GM18951 (cell line): ENCODE measurements at regions of chr15 and their contacts with region 1.

Region 1: DNA sequence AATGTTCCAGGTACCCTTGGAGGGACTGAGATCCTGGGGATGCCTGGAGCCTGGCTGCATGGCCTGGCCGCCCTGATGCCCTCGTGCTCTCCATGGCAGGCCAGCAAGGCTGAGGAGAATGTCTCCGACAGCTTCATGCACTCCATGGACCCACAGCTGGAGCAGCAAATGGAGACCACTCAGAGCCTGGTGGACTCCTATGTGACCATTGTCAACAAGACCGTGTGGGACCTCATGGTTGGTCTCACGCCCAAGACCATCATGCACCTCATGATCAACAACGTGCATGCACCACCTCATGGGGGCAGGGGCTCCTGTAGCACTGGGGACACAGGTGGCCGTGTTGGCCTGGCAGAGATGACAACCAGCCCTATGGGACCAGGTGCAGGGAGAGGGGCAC is 19.7 kb downstream of the GOLGA6A start:
- POLR2A ChIP-seq: no peak

Region 2: GRCh38 chr15:73273181-73274002 is 789.3 kb before region 1 on chr15:
- in situ Hi-C with region 1: no loop called
- POLR2A ChIP-seq: no peak

Region 3: GRCh38 chr15:73972984-73973682 is 89.5 kb before region 1 on chr15:
- in situ Hi-C with region 1: no loop called
- POLR2A ChIP-seq: no peak

Region 4: GRCh38 chr15:74184276-74185091 is 121.8 kb after region 1 on chr15:
- in situ Hi-C with region 1: no loop called
- POLR2A ChIP-seq: no peak

Region 5: DNA sequence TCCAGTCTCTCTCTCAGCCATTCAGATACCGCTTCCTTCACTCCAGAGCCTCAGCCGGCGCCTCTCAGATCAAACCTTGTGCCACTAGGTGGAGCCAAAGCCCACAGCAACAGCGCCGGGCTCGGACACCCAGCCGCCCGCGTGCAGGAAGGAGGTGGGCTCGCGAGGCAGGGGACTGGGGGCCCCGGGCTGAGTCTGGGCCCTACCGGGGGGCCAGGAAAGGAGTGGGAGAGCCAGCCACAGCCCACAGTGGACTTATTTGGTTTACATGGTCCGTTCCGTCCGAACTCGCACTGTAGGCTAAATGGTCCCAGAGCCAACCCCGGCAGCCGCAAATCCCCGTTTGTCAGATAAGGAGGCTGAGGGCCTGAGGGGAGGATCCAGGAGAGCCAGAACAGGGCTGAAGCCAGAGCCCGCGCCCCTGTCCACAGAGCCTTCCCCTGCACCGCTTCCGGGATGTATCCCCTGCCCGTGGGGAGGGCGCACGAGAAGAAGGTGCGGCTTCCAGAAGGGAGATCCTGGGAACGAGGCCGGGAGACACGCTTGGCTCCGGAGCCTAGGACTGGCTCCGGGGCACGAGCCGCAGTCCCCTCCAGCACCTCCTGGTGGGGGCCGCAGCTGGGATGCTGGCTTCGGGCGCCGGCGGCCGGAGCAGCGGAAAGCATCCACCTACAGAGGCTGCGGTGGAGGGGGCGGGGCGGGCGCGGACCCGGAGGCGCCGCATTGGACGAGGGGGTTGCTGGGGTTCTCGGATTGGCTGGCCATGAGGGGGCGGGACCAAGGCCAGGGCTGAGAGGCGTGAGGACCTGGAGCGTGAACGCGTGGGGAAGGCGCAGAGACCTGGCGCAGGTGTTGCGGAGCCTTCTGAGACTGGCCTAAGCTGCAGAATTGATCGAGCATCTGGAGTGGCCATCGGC is 311.3 kb after region 1 on chr15:
- in situ Hi-C with region 1: no loop called
- POLR2A ChIP-seq: peak; percentile 57

Region 6: DNA sequence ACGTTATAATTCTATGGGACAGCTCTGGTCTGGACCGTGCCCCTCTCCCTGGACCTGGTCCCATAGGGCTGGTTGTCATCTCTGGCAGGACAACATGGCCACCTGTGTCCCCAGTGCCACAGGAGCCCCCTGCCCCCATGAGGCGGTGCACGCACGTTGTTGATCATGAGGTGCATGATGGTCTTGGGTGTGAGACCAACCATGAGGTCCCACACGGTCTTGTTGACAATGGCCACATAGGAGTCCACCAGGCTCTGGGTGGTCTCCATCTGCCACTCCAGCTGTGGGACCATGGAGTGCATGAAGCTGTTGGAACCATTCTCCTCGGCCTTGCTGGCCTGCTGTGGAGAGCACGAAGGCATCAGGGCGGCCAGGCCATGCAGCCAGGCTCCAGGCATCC is 1239.6 kb after region 1 on chr15:
- in situ Hi-C with region 1: loop called (anchors 10 kb)
- POLR2A ChIP-seq: no peak